ENCODE measurements at regions of chr12 and their contacts with region 1.

Region 1: DNA sequence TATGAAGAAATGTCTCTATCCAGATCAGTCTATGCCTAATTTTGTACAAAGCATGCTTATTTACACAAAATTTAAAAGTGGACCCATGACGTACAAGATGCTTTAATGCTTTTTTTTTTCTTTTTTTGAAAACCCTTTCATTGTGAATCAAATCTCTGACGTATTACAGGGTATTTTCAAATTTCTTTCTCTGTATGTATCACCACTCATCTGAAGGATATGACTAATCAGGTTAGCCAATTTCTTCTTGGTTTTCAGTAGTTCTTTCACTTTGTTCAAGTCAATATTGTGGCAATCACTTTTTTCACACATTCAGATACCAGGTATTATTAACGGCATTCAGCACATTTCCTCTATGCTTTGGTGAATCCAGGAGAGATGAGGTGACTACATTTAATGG is 685.3 kb downstream of the TRHDE start:
- DNase-seq: no peak
- H3K4me3 ChIP-seq: no peak overlapping the region
- H3K27ac ChIP-seq: no peak overlapping the region
- H3K4me1 ChIP-seq: no peaks in the 10 kb centered on the region
- H3K27me3 ChIP-seq: no peaks in the 10 kb centered on the region
- CTCF ChIP-seq: no peak

Region 2: GRCh38 chr12:73547421-73547820 is 590.0 kb after region 1 on chr12:
- intact Hi-C with region 1: loop called (anchors 5 kb)
- DNase-seq: no peak
- H3K4me3 ChIP-seq: no peak overlapping the region
- H3K27ac ChIP-seq: no peak overlapping the region
- H3K4me1 ChIP-seq: no peaks in the 10 kb centered on the region
- H3K27me3 ChIP-seq: no peaks in the 10 kb centered on the region
- CTCF ChIP-seq: no peak